Ascending aorta (tissue), 2 donors: ENCODE measurements at regions of chr10 and their contacts with region 1.

Region 1: GRCh38 chr10:122307669-122308486 is 36.8 kb downstream of the BTBD16 start:
- DNase-seq: peak; percentile 25 to 95
- H3K4me3 ChIP-seq: peak overlapping the region; percentile 4 to 40
- H3K27ac ChIP-seq: peak overlapping the region; percentile 92 to 93
- H3K4me1 ChIP-seq: peaks cover 10 to 14% of the 10 kb centered on the region in 2 donors
- H3K27me3 ChIP-seq: no peaks in the 10 kb centered on the region
- CTCF ChIP-seq: no peak

Region 2: GRCh38 chr10:122286867-122287266 is 21.0 kb before region 1 on chr10:
- intact Hi-C with region 1: loop called (anchors 1 kb)
- DNase-seq: peak; percentile 74 to 89
- H3K4me3 ChIP-seq: no peak overlapping the region
- H3K27ac ChIP-seq: peak overlapping the region; percentile 67 to 73
- H3K4me1 ChIP-seq: peaks cover 6 to 15% of the 10 kb centered on the region in 2 donors
- H3K27me3 ChIP-seq: no peaks in the 10 kb centered on the region
- CTCF ChIP-seq: no peak

Region 3: GRCh38 chr10:122323941-122324675 is 16.2 kb after region 1 on chr10:
- intact Hi-C with region 1: loop called (anchors 1 kb)
- DNase-seq: peak in 1 of 2 donors; percentile 30
- H3K4me3 ChIP-seq: no peak overlapping the region
- H3K27ac ChIP-seq: no peak overlapping the region
- H3K4me1 ChIP-seq: no peaks in the 10 kb centered on the region
- H3K27me3 ChIP-seq: no peaks in the 10 kb centered on the region
- CTCF ChIP-seq: no peak

Region 4: GRCh38 chr10:122487174-122487765 is 179.4 kb after region 1 on chr10:
- intact Hi-C with region 1: no loop called
- DNase-seq: no peak
- H3K4me3 ChIP-seq: no peak overlapping the region
- H3K27ac ChIP-seq: no peak overlapping the region
- H3K4me1 ChIP-seq: peaks cover 7 to 23% of the 10 kb centered on the region in 2 donors
- H3K27me3 ChIP-seq: no peaks in the 10 kb centered on the region
- CTCF ChIP-seq: no peak